Endothelial cell of umbilical vein (primary cell): ENCODE measurements at regions of chr2 and their contacts with region 1.

Region 1: GRCh38 chr2:136013955-136014354 is 28.5 kb upstream of the DARS1 start:
- DNase-seq: peak; percentile 74
- H3K4me3 ChIP-seq: no peak overlapping the region
- H3K27ac ChIP-seq: no peak overlapping the region
- H3K4me1 ChIP-seq: no peaks in the 10 kb centered on the region
- H3K27me3 ChIP-seq: peaks cover 15 to 22% of the 10 kb centered on the region in 2 experiments
- CTCF ChIP-seq: no peak
- POLR2A ChIP-seq: no peak

Region 2: GRCh38 chr2:136000502-136000901 is 13.5 kb before region 1 on chr2:
- CTCF ChIA-PET with region 1: interaction called, 7 read pairs
- POLR2A ChIA-PET with region 1: no interaction called
- dilution Hi-C with region 1: no loop called
- intact Hi-C with region 1: loop called (anchors 1 kb)
- DNase-seq: peak; percentile 23
- H3K4me3 ChIP-seq: no peak overlapping the region
- H3K27ac ChIP-seq: no peak overlapping the region
- H3K4me1 ChIP-seq: peaks cover 6% of the 10 kb centered on the region
- H3K27me3 ChIP-seq: peaks cover 0 to 2% of the 10 kb centered on the region in 2 experiments
- CTCF ChIP-seq: no peak
- POLR2A ChIP-seq: no peak

Region 3: DNA sequence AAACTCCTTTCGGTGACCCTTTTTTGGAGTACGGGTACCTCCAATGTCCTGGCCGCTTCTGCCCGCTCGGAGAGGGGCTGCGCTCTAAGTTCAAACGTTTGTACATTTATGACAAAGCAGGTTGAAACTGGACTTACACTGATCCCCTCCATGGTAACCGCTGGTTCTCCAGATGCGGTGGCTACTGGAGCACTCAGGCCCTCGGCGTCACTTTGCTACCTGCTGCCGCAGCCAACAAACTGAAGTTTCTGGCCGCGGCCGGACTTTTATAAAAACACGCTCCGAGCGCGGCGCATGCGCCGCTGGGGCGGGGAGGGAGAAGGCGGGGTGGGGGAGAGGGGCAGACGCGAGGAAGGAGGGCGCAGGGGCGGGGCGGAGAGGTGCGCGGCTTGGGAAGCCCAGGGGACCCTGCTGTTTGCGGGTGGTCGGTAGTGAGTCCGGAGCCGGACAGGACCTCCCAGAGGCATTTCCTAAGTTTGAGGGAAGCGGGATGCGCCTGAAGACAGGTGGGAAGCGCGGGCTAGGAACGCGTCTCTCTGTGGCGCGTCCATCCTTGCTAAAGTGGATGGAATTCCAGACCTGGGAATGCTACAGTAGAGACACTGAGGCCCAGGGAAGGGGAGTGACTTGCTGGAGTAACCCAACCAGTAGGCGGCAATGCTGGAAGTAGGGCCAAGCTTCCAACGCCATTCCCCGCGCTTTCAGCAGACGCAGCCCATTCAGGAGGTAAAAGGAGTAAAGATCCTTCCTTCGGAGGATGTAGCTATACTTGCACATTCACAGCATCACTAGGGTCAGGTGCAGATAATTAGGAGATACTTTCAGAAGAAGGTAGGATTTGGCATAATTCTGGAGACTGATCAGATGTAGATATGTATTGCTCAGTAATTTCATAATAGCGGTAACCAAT is 104.2 kb after region 1 on chr2 and contains the start of gene CXCR4:
- CTCF ChIA-PET with region 1: no interaction called
- POLR2A ChIA-PET with region 1: no interaction called
- dilution Hi-C with region 1: no loop called
- intact Hi-C with region 1: loop called (anchors 5 kb)
- DNase-seq: peak; percentile 52
- H3K4me3 ChIP-seq: peak within 1 kb of the TSS; percentile 45 to 73 (median 69)
- H3K27ac ChIP-seq: no peak within 1 kb of the TSS
- H3K4me1 ChIP-seq: peaks cover 23% of the 10 kb centered on the region
- H3K27me3 ChIP-seq: peaks cover 48 to 73% of the 10 kb centered on the region in 2 experiments
- CTCF ChIP-seq: peak; percentile 16 to 32
- POLR2A ChIP-seq: peak; percentile 55
- total RNA-seq, gene CXCR4: 52.4 and 81.0 TPM in 2 replicates